A673 (cell line): ENCODE measurements at regions of chr9 and their contacts with region 1.

Region 1: DNA sequence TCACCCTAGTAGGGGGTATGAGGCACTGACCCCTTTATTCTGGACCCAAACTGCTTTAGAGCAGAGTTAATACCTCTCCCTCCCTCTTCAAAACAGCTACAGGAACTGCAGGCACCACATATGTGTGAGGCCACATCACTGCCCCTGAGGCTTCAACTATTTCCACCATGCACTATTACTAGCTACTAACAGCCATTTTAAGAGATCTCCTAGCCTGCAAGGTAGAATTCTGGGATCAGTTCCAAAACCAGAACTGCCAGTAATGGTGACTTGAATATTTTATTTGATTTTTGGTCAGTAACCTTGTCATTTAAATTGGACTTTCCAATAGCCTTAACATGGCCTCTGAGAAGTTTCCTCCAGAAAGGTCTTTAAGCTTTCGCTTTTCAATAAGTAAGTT is 55.3 kb upstream of the FSD1L start:
- DNase-seq: no peak
- H3K4me3 ChIP-seq: no peak overlapping the region
- H3K27ac ChIP-seq: no peak overlapping the region
- H3K4me1 ChIP-seq: no peaks in the 10 kb centered on the region
- H3K27me3 ChIP-seq: no peaks in the 10 kb centered on the region
- CTCF ChIP-seq: no peak

Region 2: GRCh38 chr9:104856413-104856941 is 536.1 kb before region 1 on chr9:
- CTCF ChIA-PET with region 1: interaction called, 15 read pairs
- POLR2A ChIA-PET with region 1: no interaction called
- intact Hi-C with region 1: no loop called
- DNase-seq: no peak
- H3K4me3 ChIP-seq: no peak overlapping the region
- H3K27ac ChIP-seq: no peak overlapping the region
- H3K4me1 ChIP-seq: no peaks in the 10 kb centered on the region
- H3K27me3 ChIP-seq: no peaks in the 10 kb centered on the region
- CTCF ChIP-seq: no peak

Region 3: GRCh38 chr9:105259731-105260612 is 132.6 kb before region 1 on chr9:
- CTCF ChIA-PET with region 1: no interaction called
- POLR2A ChIA-PET with region 1: no interaction called
- intact Hi-C with region 1: no loop called
- DNase-seq: no peak
- H3K4me3 ChIP-seq: no peak overlapping the region
- H3K27ac ChIP-seq: no peak overlapping the region
- H3K4me1 ChIP-seq: peaks cover 10% of the 10 kb centered on the region
- H3K27me3 ChIP-seq: no peaks in the 10 kb centered on the region
- CTCF ChIP-seq: no peak

Region 4: GRCh38 chr9:105355781-105356180 is 36.8 kb before region 1 on chr9:
- CTCF ChIA-PET with region 1: no interaction called
- POLR2A ChIA-PET with region 1: no interaction called
- intact Hi-C with region 1: no loop called
- DNase-seq: no peak
- H3K4me3 ChIP-seq: no peak overlapping the region
- H3K27ac ChIP-seq: no peak overlapping the region
- H3K4me1 ChIP-seq: no peaks in the 10 kb centered on the region
- H3K27me3 ChIP-seq: no peaks in the 10 kb centered on the region
- CTCF ChIP-seq: no peak